BJ (cell line): ENCODE measurements at regions of chr5 and their contacts with region 1.

Region 1: DNA sequence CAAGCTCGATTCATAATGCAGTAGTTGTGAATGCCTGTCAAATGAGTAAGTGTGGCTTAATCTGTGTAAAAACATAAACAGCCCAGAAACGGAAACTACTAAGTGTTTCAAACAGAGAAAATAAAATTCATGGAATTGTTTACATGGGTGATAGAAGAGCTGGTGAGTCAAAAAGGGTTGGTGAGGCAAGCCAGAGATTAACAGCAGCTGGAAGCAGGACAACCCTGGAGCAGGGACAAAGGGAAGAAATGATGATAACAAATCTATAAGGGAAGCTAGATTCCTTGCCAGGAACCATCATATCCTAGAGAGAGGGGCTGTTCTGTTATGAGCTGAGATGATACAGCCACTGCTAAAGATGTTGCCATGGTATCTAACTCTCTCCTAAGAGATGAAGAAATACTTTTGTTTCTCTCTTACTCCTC is 18.0 kb upstream of the PRR16 start:
- DNase-seq: peak; percentile 80
- H3K4me3 ChIP-seq: no peak overlapping the region
- H3K27me3 ChIP-seq: no peaks in the 10 kb centered on the region
- CTCF ChIP-seq: no peak

Region 2: GRCh38 chr5:120139039-120139438 is 307.0 kb before region 1 on chr5:
- CTCF ChIA-PET with region 1: interaction called, 3 read pairs
- POLR2A ChIA-PET with region 1: interaction called, 13 read pairs
- DNase-seq: peak; percentile 96
- H3K4me3 ChIP-seq: no peak overlapping the region
- H3K27me3 ChIP-seq: no peaks in the 10 kb centered on the region
- CTCF ChIP-seq: no peak

Region 3: DNA sequence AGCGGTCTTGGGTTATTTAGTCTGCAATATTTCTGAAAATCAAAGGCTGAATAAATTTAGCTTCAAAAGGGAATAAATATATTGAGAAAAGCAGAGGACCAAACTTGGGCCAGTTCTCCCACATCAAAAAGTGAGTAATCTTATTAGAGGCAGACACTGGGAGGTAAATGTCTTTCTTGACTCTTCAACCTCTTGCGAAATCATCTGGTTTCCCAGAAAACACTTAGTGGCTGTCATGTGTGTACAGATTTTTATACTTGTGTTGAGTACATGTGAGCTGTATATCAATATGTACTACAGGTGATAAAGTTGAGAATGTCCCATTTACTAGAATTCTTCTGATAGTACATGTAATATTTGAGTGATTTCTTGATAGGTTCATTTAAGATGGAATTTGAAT is 472.9 kb after region 1 on chr5:
- CTCF ChIA-PET with region 1: no interaction called
- POLR2A ChIA-PET with region 1: no interaction called
- DNase-seq: no peak
- H3K4me3 ChIP-seq: no peak overlapping the region
- H3K27me3 ChIP-seq: no peaks in the 10 kb centered on the region
- CTCF ChIP-seq: no peak